ENCODE measurements at regions of chr6 and their contacts with region 1.

Region 1: GRCh38 chr6:154733012-154733625 is at the start of gene SCAF8:
- DNase-seq: peak; percentile 45 to 80
- H3K4me3 ChIP-seq: peak within 1 kb of the TSS; percentile 89
- H3K27ac ChIP-seq: peak within 1 kb of the TSS; percentile 91
- H3K4me1 ChIP-seq: peaks cover 23% of the 10 kb centered on the region
- H3K27me3 ChIP-seq: no peaks in the 10 kb centered on the region
- CTCF ChIP-seq: peak; percentile 61; the same call in 1 of the 2 replicates
- total RNA-seq, gene SCAF8: 21.6 and 22.7 TPM in 2 replicates

Region 2: DNA sequence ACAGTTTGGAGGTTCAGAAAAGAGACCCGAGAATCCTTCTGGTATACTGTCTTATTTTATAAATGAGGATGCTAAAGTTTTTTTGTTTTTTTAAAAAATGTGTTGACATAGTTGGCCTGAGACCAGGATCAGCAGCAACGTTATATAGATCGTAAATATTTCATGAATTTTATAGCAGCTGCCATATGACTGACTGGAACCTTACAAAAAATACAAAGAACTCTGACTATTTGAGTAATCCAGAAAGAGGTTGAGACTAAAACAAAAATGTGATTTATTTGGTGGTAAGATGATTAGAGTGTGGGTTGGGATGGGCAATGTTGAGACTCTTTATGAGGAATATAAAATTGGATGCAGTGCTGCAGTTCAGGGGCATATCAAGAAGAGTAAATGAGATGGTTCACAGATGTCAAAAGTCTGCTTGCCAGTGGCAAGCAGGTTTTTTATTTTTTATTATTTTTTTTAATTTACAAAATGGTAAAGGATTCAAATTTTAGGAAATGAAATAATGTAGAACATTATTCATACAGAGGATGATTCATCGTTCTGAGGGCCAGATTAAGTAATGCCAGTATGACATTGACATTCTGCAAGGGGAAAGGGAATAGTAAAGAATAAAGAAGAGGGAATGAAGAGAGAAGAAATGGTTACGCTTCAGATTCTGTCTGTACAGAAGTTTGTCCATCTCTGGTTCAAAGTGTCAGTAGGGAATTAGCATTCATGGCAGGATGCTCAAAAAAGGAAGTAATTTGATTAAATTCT is 58.6 kb after region 1 on chr6:
- CTCF ChIA-PET with region 1: no interaction called
- POLR2A ChIA-PET with region 1: no interaction called
- intact Hi-C with region 1: loop called (anchors 5 kb)
- DNase-seq: no peak
- H3K4me3 ChIP-seq: no peak overlapping the region
- H3K27ac ChIP-seq: peak overlapping the region; percentile 61
- H3K4me1 ChIP-seq: peaks cover 25% of the 10 kb centered on the region
- H3K27me3 ChIP-seq: no peaks in the 10 kb centered on the region
- CTCF ChIP-seq: no peak

Region 3: DNA sequence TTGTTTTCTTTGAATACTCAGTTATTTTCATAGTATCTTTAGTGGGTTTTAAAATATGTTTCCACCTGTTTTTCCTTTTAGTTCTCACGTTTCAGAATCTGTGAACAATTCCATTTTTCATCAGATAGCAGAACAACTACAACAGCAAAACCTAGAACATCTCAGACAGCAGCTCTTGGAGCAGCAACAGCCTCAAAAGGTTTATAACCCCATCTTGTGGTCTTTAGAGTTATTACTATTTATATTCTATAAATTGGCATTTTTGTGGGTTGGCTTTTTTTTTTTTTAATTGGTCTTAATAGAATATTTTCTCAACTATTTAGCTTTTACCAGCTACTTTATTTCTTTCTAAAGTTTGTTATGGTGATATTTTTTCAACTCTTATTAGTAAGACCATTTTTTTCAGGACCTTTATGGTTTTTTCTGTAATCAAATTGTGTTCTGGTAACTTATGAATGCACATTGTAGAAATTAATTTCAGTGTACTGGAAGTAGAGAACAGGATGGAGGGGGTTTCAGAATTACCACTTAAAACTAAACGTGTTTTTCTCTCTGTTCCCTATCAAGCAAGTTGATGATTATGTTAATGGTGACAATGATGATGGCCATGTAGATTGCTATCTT is 72.3 kb after region 1 on chr6:
- CTCF ChIA-PET with region 1: no interaction called
- POLR2A ChIA-PET with region 1: no interaction called
- intact Hi-C with region 1: loop called (anchors 1 kb)
- DNase-seq: no peak
- H3K4me3 ChIP-seq: no peak overlapping the region
- H3K27ac ChIP-seq: no peak overlapping the region
- H3K4me1 ChIP-seq: no peaks in the 10 kb centered on the region
- H3K27me3 ChIP-seq: no peaks in the 10 kb centered on the region
- CTCF ChIP-seq: peak; percentile 69

Region 4: GRCh38 chr6:154815938-154816820 is 83.1 kb after region 1 on chr6:
- CTCF ChIA-PET with region 1: no interaction called
- POLR2A ChIA-PET with region 1: no interaction called
- intact Hi-C with region 1: no loop called
- DNase-seq: no peak
- H3K4me3 ChIP-seq: no peak overlapping the region
- H3K27ac ChIP-seq: no peak overlapping the region
- H3K4me1 ChIP-seq: no peaks in the 10 kb centered on the region
- H3K27me3 ChIP-seq: no peaks in the 10 kb centered on the region
- CTCF ChIP-seq: no peak

Region 5: DNA sequence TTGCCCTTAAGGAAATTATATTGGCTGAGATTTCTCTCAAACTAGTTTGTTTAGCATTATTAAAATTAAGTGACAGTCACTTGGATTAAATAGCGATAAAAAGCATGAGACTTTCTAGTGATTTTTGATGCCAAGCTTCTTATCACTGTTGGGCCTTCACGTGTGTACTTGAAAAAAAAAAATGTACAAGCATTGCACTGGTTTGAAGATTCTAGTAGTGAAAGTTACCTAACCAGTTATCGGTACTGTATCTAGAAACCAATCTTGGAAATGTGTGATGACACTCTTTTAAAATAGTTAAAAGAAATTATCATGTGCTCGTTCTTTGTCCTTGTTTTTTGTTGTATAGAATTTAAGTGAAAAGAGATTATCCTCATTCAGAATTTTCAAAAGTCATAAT is 102.2 kb after region 1 on chr6:
- CTCF ChIA-PET with region 1: no interaction called
- POLR2A ChIA-PET with region 1: interaction called, 10 read pairs
- intact Hi-C with region 1: no loop called
- DNase-seq: no peak
- H3K4me3 ChIP-seq: no peak overlapping the region
- H3K27ac ChIP-seq: 0 out of 2 replicates have a peak overlapping the region, but pooled peaks have one; percentile 8
- H3K4me1 ChIP-seq: no peaks in the 10 kb centered on the region
- H3K27me3 ChIP-seq: no peaks in the 10 kb centered on the region
- CTCF ChIP-seq: no peak